Adrenal gland (tissue), 19 donors: ENCODE measurements at regions of chr7 and their contacts with region 1.

Region 1: GRCh38 chr7:47812429-47813136 is 135.7 kb downstream of the PKD1L1 start:
- DNase-seq: peak in 1 of 7 donors; percentile 29
- H3K4me3 ChIP-seq: no peak overlapping the region
- H3K27ac ChIP-seq: no peak overlapping the region
- H3K4me1 ChIP-seq: peaks cover 0 to 10% of the 10 kb centered on the region in 2 donors
- H3K27me3 ChIP-seq: no peaks in the 10 kb centered on the region
- CTCF ChIP-seq: no peak
- POLR2A ChIP-seq: no peak

Region 2: DNA sequence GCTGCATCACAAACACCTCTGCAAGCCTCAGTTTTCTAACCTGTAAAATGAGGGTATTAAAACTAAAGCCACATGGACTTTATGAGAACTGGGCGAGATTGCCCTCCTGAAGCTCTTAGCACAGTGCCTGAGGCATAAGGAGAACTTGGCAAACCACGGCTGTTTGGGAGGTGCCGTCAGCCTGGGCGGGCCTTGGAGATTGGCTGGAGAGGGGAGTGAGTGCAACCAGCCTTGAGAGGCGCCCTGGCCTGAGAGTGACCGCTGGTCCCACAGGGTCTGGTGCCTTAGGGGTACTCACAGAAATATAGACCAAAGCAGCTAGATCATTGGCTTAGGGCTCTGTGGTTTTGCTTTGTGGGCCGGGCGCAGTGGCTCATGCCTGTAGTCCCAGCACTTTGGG is 225.2 kb before region 1 on chr7:
- intact Hi-C with region 1: loop called (anchors 5 to 10 kb)
- DNase-seq: peak in 1 of 7 donors; percentile 31
- H3K4me3 ChIP-seq: no peak overlapping the region
- H3K27ac ChIP-seq: no peak overlapping the region
- H3K4me1 ChIP-seq: peaks cover 0 to 17% of the 10 kb centered on the region in 2 donors
- H3K27me3 ChIP-seq: no peaks in the 10 kb centered on the region
- CTCF ChIP-seq: no peak
- POLR2A ChIP-seq: no peak

Region 3: GRCh38 chr7:47647181-47647917 is 165.2 kb before region 1 on chr7:
- intact Hi-C with region 1: no loop called
- DNase-seq: peak in 3 of 7 donors; percentile 37 to 60 (median 40)
- H3K4me3 ChIP-seq: no peak overlapping the region
- H3K27ac ChIP-seq: peak overlapping the region in 1 of 5 donors; percentile 33
- H3K4me1 ChIP-seq: peaks cover 0 to 8% of the 10 kb centered on the region in 2 donors
- H3K27me3 ChIP-seq: no peaks in the 10 kb centered on the region
- CTCF ChIP-seq: no peak
- POLR2A ChIP-seq: no peak